Heart right ventricle (tissue), 16 donors: ENCODE measurements at regions of chr12 and their contacts with region 1.

Region 1: GRCh38 chr12:115259968-115260747 is 576.2 kb upstream of the TBX3 start:
- DNase-seq: no peak
- ATAC-seq: no peak
- H3K4me3 ChIP-seq: no peak overlapping the region
- H3K27ac ChIP-seq: no peak overlapping the region
- H3K4me1 ChIP-seq: no peaks in the 10 kb centered on the region
- H3K27me3 ChIP-seq: peaks cover 0 to 13% (median 0%) of the 10 kb centered on the region in 7 donors
- CTCF ChIP-seq: no peak

Region 2: DNA sequence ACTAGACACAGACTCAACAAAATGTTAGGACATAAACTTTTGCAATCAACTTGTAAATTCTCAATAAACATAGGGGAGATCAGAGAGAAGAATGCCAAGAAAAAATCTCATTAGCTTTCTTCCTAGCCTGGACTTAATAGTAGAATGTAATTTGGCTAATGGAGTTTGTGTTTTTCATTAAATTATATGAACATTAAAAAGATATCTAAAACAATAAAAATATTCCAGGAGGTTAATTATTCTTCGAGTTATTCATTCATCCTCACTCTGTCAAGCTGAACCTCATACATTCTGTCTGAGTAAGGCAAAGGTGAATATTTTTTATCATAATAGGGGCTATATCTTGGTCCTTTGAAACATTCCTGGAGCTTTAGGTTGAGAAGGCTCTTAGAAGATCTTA is 24.3 kb before region 1 on chr12:
- intact Hi-C with region 1: loop called in 1 of 10 experiments (anchors 1 kb)
- DNase-seq: no peak
- ATAC-seq: no peak
- H3K4me3 ChIP-seq: no peak overlapping the region
- H3K27ac ChIP-seq: no peak overlapping the region
- H3K4me1 ChIP-seq: no peaks in the 10 kb centered on the region
- H3K27me3 ChIP-seq: peaks cover 0 to 9% (median 0%) of the 10 kb centered on the region in 7 donors
- CTCF ChIP-seq: no peak